Activated CD8-positive, alpha-beta memory T cell treated with anti-CD3 and anti-CD28 coated beads, Interleukin-2, amount 10 ng/mL, durations not matched to agents 7 days and 5 days (primary cell): ENCODE measurements at regions of chr15 and their contacts with region 1.

Region 1: DNA sequence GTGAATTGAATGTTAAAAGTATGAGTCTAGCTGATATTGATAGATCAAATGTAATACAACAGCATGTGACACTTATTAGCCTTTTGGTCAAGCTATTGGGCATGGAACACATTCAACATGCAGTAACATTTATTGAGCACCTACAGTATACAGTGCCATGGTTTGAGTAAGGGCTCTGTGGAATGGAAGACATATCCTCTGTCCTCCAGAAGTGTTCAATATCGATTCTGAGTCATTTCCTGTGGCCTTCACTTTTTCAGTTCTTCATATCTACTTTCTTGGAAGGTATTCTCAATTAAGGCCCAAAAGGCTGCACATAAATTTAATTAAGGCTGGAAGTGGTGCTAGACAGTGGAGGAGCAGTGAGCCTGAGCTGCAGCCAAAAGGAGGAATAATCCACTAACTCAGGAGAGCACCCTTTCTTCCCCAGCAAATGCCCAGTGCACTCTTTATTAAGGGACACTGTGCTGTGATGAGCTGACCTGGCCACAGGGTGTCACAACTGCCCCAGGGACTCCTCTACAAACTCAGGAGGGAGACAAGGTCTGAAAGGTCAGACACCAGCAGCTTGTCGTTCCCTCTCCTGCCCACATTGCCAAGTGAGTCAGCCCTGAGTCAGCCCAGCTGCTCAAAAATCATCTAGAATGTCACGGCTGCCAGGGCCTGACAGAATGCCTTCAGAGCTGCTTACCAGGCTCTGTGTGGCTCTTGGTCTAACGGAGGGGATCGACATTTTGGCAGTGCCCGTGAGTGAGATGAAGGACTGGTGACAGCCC is 544.8 kb downstream of the AGBL1 start:
- DNase-seq: peak; percentile 88
- ATAC-seq: peak; percentile 100
- H3K4me3 Mint-ChIP-seq: no peak overlapping the region
- H3K27ac Mint-ChIP-seq: peak overlapping the region; percentile 62
- H3K4me1 Mint-ChIP-seq: peaks cover 25% of the 10 kb centered on the region
- H3K27me3 Mint-ChIP-seq: peaks cover 4% of the 10 kb centered on the region

Region 2: GRCh38 chr15:86653344-86654197 is 29.1 kb after region 1 on chr15:
- CTCF ChIA-PET with region 1: interaction called, 10 read pairs
- DNase-seq: no peak
- ATAC-seq: peak; percentile 77
- H3K4me3 Mint-ChIP-seq: peak overlapping the region; percentile 19
- H3K27ac Mint-ChIP-seq: peak overlapping the region; percentile 72
- H3K4me1 Mint-ChIP-seq: peaks cover 53% of the 10 kb centered on the region
- H3K27me3 Mint-ChIP-seq: no peaks in the 10 kb centered on the region

Region 3: DNA sequence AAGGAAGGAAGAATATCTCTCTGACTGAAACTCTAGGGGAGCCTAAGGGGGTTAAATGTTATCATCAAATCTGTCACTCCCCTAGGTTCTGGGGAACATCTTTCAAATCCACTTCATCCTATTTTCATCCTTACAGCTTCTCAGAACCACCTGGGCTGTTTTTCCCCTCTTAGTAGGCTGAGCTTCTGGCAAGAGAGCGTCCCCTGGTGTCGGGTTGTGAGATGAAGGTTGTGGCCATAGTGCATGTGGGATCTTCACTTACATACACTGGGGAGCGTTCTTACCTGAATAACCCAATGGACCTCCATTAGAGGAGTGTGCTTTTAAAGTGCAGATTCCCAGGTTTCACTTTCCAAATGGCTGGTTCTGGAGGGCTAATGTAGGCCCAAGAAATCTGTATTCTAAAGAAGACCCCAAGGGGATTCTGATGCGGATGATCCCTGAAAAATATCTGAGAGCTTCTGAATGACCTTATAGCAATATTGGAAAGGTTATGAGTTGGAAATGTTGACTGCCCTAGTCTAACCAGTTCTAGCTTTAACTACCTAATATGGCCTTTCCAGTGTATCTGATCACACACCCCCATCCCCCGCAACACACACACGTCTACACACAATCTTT is 118.9 kb after region 1 on chr15:
- CTCF ChIA-PET with region 1: interaction called, 42 read pairs
- DNase-seq: peak; percentile 63
- ATAC-seq: no peak
- H3K4me3 Mint-ChIP-seq: no peak overlapping the region
- H3K27ac Mint-ChIP-seq: no peak overlapping the region
- H3K4me1 Mint-ChIP-seq: no peaks in the 10 kb centered on the region
- H3K27me3 Mint-ChIP-seq: no peaks in the 10 kb centered on the region